Caco-2 (cell line): ENCODE measurements at regions of chr12 and their contacts with region 1.

Region 1: DNA sequence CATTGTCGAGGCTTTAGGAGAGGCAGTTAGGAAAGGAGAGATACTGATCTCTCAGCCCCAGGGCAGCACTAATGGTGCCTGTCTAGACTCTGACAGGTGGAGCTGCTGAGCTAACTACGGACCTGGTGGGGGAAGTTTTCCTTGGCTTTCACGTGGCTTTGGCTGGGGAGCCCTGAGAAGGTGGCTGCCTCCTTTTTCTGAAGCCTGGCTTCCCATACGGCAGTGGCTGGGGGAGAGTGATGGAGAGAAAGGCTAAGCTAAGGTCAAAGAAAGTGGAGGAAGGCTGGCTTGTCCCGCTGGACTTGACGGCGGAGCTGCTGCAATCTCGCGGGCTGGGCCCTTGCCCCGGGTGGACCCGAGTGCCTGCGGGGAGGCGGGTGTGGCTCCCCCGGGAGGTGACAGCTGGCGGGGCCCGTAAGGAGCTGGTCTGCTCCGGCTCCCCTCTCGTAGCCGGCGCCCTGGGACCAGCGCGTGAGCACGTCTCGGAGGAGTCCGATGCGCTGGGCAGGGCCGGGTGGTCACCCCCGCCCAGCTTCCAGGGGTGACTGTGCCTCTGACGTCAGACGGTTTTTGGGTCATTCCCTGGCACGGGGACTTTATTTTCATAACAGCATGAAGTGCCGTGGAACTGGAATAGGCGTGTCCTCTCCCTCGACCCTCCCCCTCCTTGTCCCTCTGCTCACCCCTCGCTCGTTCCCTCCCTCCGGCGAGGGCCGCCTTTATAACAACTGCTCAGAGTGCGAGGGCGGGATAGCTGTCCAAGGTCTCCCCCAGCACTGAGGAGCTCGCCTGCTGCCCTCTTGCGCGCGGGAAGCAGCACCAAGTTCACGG is at the start of gene GPRC5A:
- DNase-seq: peak; percentile 93 to 95
- H3K4me3 ChIP-seq: peak within 1 kb of the TSS; percentile 56
- H3K4me3 Mint-ChIP-seq: peak within 1 kb of the TSS; percentile 83
- H3K27ac Mint-ChIP-seq: peak within 1 kb of the TSS; percentile 96
- H3K4me1 ChIP-seq: peaks cover 31% of the 10 kb centered on the region
- H3K4me1 Mint-ChIP-seq: peaks cover 53% of the 10 kb centered on the region
- H3K27me3 ChIP-seq: no peaks in the 10 kb centered on the region
- H3K27me3 Mint-ChIP-seq: no peaks in the 10 kb centered on the region
- CTCF ChIP-seq: peak in 1 of 2 experiments; percentile 36
- total RNA-seq, gene GPRC5A: 73.9 and 99.7 TPM in 2 replicates

Region 2: GRCh38 chr12:12813120-12814101 is 77.6 kb before region 1 on chr12 and contains the start of gene DDX47:
- CTCF ChIA-PET with region 1: interaction called, 6 read pairs
- POLR2A ChIA-PET with region 1: interaction called, 10 read pairs
- intact Hi-C with region 1: loop called (anchors 2 kb)
- DNase-seq: peak; percentile 97 to 99
- H3K4me3 ChIP-seq: peak within 1 kb of the TSS; percentile 78
- H3K4me3 Mint-ChIP-seq: peak within 1 kb of the TSS; percentile 96
- H3K27ac Mint-ChIP-seq: peak within 1 kb of the TSS; percentile 95
- H3K4me1 ChIP-seq: peaks cover 52% of the 10 kb centered on the region
- H3K4me1 Mint-ChIP-seq: peaks cover 39% of the 10 kb centered on the region
- H3K27me3 ChIP-seq: no peaks in the 10 kb centered on the region
- H3K27me3 Mint-ChIP-seq: no peaks in the 10 kb centered on the region
- CTCF ChIP-seq: peak; percentile 99
- total RNA-seq, gene DDX47: 121 and 138 TPM in 2 replicates

Region 3: GRCh38 chr12:12837025-12837872 is 53.8 kb before region 1 on chr12:
- CTCF ChIA-PET with region 1: interaction called, 59 read pairs
- POLR2A ChIA-PET with region 1: interaction called, 26 read pairs
- intact Hi-C with region 1: loop called (anchors 1 kb)
- DNase-seq: peak; percentile 76 to 78
- H3K4me3 ChIP-seq: no peak overlapping the region
- H3K4me3 Mint-ChIP-seq: peak overlapping the region; percentile 0
- H3K27ac Mint-ChIP-seq: peak overlapping the region; percentile 46
- H3K4me1 ChIP-seq: peaks cover 45% of the 10 kb centered on the region
- H3K4me1 Mint-ChIP-seq: peaks cover 50% of the 10 kb centered on the region
- H3K27me3 ChIP-seq: no peaks in the 10 kb centered on the region
- H3K27me3 Mint-ChIP-seq: no peaks in the 10 kb centered on the region
- CTCF ChIP-seq: peak; percentile 73 to 85

Region 4: GRCh38 chr12:12901158-12901791 is 10.2 kb after region 1 on chr12:
- CTCF ChIA-PET with region 1: interaction called, 3 read pairs
- POLR2A ChIA-PET with region 1: interaction called, 4 read pairs
- intact Hi-C with region 1: loop called (anchors 1 kb)
- DNase-seq: peak in 1 of 2 experiments; percentile 58
- H3K4me3 ChIP-seq: no peak overlapping the region
- H3K4me3 Mint-ChIP-seq: no peak overlapping the region
- H3K27ac Mint-ChIP-seq: peak overlapping the region; percentile 34
- H3K4me1 ChIP-seq: peaks cover 60% of the 10 kb centered on the region
- H3K4me1 Mint-ChIP-seq: peaks cover 60% of the 10 kb centered on the region
- H3K27me3 ChIP-seq: no peaks in the 10 kb centered on the region
- H3K27me3 Mint-ChIP-seq: no peaks in the 10 kb centered on the region
- CTCF ChIP-seq: no peak

Region 5: GRCh38 chr12:12909995-12910391 is 19.0 kb after region 1 on chr12:
- CTCF ChIA-PET with region 1: interaction called, 3 read pairs
- POLR2A ChIA-PET with region 1: interaction called, 5 read pairs
- intact Hi-C with region 1: loop called (anchors 1 kb)
- DNase-seq: no peak
- H3K4me3 ChIP-seq: no peak overlapping the region
- H3K4me3 Mint-ChIP-seq: peak overlapping the region; percentile 23
- H3K27ac Mint-ChIP-seq: peak overlapping the region; percentile 79
- H3K4me1 ChIP-seq: peaks cover 28% of the 10 kb centered on the region
- H3K4me1 Mint-ChIP-seq: peaks cover 36% of the 10 kb centered on the region
- H3K27me3 ChIP-seq: no peaks in the 10 kb centered on the region
- H3K27me3 Mint-ChIP-seq: no peaks in the 10 kb centered on the region
- CTCF ChIP-seq: no peak